AG04450 (cell line): ENCODE measurements at regions of chr20 and their contacts with region 1.

Region 1: GRCh38 chr20:38057351-38057972 is 23.9 kb downstream of the RPRD1B start:
- DNase-seq: no peak
- H3K4me3 ChIP-seq: no peak overlapping the region
- H3K27ac ChIP-seq: no peak overlapping the region
- H3K27me3 ChIP-seq: no peaks in the 10 kb centered on the region
- CTCF ChIP-seq: peak; percentile 86

Region 2: GRCh38 chr20:37564388-37565133 is 492.9 kb before region 1 on chr20:
- CTCF ChIA-PET with region 1: interaction called, 20 read pairs
- POLR2A ChIA-PET with region 1: no interaction called
- DNase-seq: no peak
- H3K4me3 ChIP-seq: no peak overlapping the region
- H3K27ac ChIP-seq: no peak overlapping the region
- H3K27me3 ChIP-seq: peaks cover 53% of the 10 kb centered on the region
- CTCF ChIP-seq: peak; percentile 90

Region 3: DNA sequence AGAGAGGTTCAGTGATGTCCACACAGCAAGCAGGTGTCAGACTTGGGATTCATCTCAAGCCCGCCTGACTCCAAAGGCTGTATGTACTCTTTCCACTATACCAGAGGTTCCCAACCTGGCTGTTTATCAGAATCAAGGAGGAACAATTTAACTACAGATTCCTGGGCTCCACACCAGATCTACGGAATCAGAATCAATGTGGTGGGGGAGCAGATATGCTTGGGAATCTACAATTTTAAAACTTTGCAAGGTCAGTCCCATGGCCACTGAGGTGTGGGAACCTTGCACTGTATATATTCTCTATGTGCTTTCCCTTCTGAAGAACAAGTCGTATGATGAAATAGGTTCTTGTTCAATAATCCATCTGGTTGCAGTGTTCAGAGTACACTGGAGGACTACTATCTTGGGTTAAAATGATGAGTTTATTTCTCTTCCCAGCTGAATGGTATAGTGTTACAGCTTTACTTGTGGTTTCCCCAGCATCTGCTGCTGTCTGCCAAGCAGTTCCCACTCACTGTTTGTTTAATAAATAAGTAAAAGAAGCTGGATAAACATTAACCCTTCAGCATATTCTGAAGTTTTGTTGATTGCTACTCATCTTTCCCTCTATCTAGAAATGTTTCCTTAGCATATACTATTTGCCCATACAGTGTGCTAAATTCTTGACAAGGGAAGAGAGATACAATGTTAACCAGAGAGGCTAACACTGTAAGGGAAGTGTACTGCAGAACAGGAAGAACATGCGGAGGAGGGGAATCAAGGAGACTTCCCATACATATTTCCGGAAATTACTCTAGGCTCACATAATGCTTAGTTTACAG is 34.1 kb before region 1 on chr20:
- CTCF ChIA-PET with region 1: no interaction called
- POLR2A ChIA-PET with region 1: no interaction called
- DNase-seq: peak; percentile 95
- H3K4me3 ChIP-seq: 0 out of 2 replicates have a peak overlapping the region, but pooled peaks have one; percentile 11
- H3K27ac ChIP-seq: peak overlapping the region; percentile 97
- H3K27me3 ChIP-seq: no peaks in the 10 kb centered on the region
- CTCF ChIP-seq: no peak

Region 4: GRCh38 chr20:38033310-38034107 is 24.0 kb before region 1 on chr20 and contains the starts of genes RPRD1B and TTI1:
- CTCF ChIA-PET with region 1: interaction called, 11 read pairs
- POLR2A ChIA-PET with region 1: interaction called, 3 read pairs
- DNase-seq: peak; percentile 54
- H3K4me3 ChIP-seq: peak within 1 kb of the TSS; percentile 95
- H3K27ac ChIP-seq: peak within 1 kb of the TSS; percentile 85
- H3K27me3 ChIP-seq: no peaks in the 10 kb centered on the region
- CTCF ChIP-seq: 0 out of 2 replicates have a peak, but pooled peaks have one; percentile 12
- polyA plus RNA-seq, gene RPRD1B: 21.5 and 23.7 TPM in 2 replicates
- polyA plus RNA-seq, gene TTI1: 14.7 and 15.1 TPM in 2 replicates

Region 5: GRCh38 chr20:38043512-38044300 is 13.8 kb before region 1 on chr20:
- CTCF ChIA-PET with region 1: interaction called, 29 read pairs
- POLR2A ChIA-PET with region 1: interaction called, 5 read pairs
- DNase-seq: no peak
- H3K4me3 ChIP-seq: no peak overlapping the region
- H3K27ac ChIP-seq: no peak overlapping the region
- H3K27me3 ChIP-seq: no peaks in the 10 kb centered on the region
- CTCF ChIP-seq: no peak

Region 6: GRCh38 chr20:38073307-38074071 is 16.0 kb after region 1 on chr20:
- CTCF ChIA-PET with region 1: interaction called, 70 read pairs
- POLR2A ChIA-PET with region 1: interaction called, 3 read pairs
- DNase-seq: peak; percentile 93
- H3K4me3 ChIP-seq: no peak overlapping the region; the same call in 1 of the 2 replicates
- H3K27ac ChIP-seq: peak overlapping the region; percentile 60
- H3K27me3 ChIP-seq: no peaks in the 10 kb centered on the region
- CTCF ChIP-seq: peak; percentile 87

Region 7: GRCh38 chr20:38165089-38165989 is 107.9 kb after region 1 on chr20 and contains the start of gene TGM2:
- CTCF ChIA-PET with region 1: interaction called, 12 read pairs
- POLR2A ChIA-PET with region 1: no interaction called
- DNase-seq: no peak
- H3K4me3 ChIP-seq: peak within 1 kb of the TSS; percentile 70
- H3K27ac ChIP-seq: peak within 1 kb of the TSS; percentile 47
- H3K27me3 ChIP-seq: no peaks in the 10 kb centered on the region
- CTCF ChIP-seq: peak; percentile 77
- polyA plus RNA-seq, gene TGM2: 326 and 398 TPM in 2 replicates

Region 8: GRCh38 chr20:38173237-38174156 is 116.0 kb after region 1 on chr20:
- CTCF ChIA-PET with region 1: interaction called, 17 read pairs
- POLR2A ChIA-PET with region 1: interaction called, 3 read pairs
- DNase-seq: peak; percentile 43
- H3K4me3 ChIP-seq: no peak overlapping the region
- H3K27ac ChIP-seq: peak overlapping the region; percentile 42
- H3K27me3 ChIP-seq: no peaks in the 10 kb centered on the region
- CTCF ChIP-seq: peak; percentile 13; the same call in 1 of the 2 replicates